Vagina (tissue), 2 donors: ENCODE measurements at regions of chr1 and their contacts with region 1.

Region 1: GRCh38 chr1:159798893-159799292 is 3.3 kb upstream of the FCRL6 start:
- DNase-seq: no peak
- H3K4me3 ChIP-seq: no peak overlapping the region
- H3K27ac ChIP-seq: no peak overlapping the region
- H3K4me1 ChIP-seq: no peaks in the 10 kb centered on the region
- H3K27me3 ChIP-seq: no peaks in the 10 kb centered on the region
- CTCF ChIP-seq: peak; percentile 67 to 78 (median 68)
- POLR2A ChIP-seq: no peak

Region 2: DNA sequence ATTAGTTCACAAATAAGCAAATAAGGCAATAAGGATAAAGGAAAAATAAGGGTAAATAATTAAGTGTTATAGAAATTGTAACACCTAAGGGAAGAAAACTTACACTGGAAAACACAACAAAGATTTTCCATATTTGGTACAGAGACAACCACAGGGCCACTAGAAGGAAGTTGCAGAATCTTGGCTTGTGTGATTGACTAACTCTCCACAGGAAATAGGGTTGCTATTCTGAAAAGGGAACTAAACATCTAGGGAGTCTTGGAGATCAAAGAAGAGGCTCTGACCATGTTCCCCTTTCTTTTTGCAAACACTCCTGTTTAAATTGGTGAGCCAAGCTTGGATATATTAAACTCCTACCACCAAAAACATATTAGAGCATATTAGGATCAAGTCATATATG is 152.2 kb before region 1 on chr1:
- intact Hi-C with region 1: no loop called
- DNase-seq: no peak
- H3K4me3 ChIP-seq: no peak overlapping the region
- H3K27ac ChIP-seq: no peak overlapping the region
- H3K4me1 ChIP-seq: no peaks in the 10 kb centered on the region
- H3K27me3 ChIP-seq: no peaks in the 10 kb centered on the region
- CTCF ChIP-seq: no peak
- POLR2A ChIP-seq: no peak

Region 3: GRCh38 chr1:159891275-159892157 is 92.6 kb after region 1 on chr1:
- intact Hi-C with region 1: loop called (anchors 5 kb)
- DNase-seq: no peak
- H3K4me3 ChIP-seq: no peak overlapping the region
- H3K27ac ChIP-seq: no peak overlapping the region
- H3K4me1 ChIP-seq: peaks cover 15% of the 10 kb centered on the region
- H3K27me3 ChIP-seq: no peaks in the 10 kb centered on the region
- CTCF ChIP-seq: peak; percentile 81 to 97 (median 97)
- POLR2A ChIP-seq: no peak

Region 4: GRCh38 chr1:159945483-159946241 is 146.8 kb after region 1 on chr1 and contains the start of gene IGSF9:
- intact Hi-C with region 1: loop called (anchors 10 kb)
- DNase-seq: no peak
- H3K4me3 ChIP-seq: peak within 1 kb of the TSS; percentile 38 to 56
- H3K27ac ChIP-seq: peak within 1 kb of the TSS; percentile 43
- H3K4me1 ChIP-seq: peaks cover 36% of the 10 kb centered on the region
- H3K27me3 ChIP-seq: no peaks in the 10 kb centered on the region
- CTCF ChIP-seq: peak; percentile 16 to 73 (median 68)
- POLR2A ChIP-seq: no peak
- total RNA-seq, gene IGSF9: 5.6 TPM